HepG2 (cell line): ENCODE measurements at regions of chr17 and their contacts with region 1.

Region 1: DNA sequence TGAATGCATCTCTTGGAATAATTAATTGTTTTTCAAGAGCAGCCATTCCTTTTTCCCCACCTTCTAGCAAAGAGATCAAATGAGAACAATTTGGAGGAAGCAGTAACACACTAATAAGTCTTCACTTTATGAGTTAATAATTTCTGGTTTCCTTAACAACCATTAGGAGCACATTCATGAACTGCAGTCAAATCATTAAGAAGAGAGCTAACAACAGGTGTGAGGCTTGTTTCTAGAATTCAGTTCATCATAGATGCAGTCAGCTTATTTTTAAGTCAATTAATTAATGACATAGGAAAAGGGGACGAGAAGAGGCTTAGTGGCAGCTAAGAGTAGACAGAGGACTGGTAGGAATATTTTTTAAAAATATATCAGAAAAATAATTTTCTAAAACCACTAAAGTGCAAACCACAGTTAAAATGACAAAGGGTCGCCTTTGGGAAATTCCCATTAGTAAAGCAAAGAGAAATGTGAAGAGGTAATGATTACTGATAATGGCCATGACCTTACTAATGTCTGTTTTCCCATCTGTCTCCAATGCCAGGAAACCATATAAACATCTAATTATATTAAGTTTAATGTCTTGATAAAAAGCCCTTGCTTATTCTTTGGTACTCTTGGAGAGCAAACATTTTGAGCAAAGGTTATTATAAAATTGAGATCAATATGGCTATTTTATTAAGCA is 184.2 kb downstream of the KCNJ2 start:
- DNase-seq: no peak
- ATAC-seq: no peak
- H3K4me3 ChIP-seq: no peak overlapping the region
- H3K27ac ChIP-seq: no peak overlapping the region
- H3K4me1 ChIP-seq: no peaks in the 10 kb centered on the region
- H3K27me3 ChIP-seq: no peaks in the 10 kb centered on the region; a peak in 1 of 5 replicates
- CTCF ChIP-seq: no peak
- EP300 ChIP-seq: no peak
- POLR2A ChIP-seq: no peak
- RAD21 ChIP-seq: no peak

Region 2: GRCh38 chr17:70314096-70314495 is 39.5 kb before region 1 on chr17:
- CTCF ChIA-PET with region 1: no interaction called
- POLR2A ChIA-PET with region 1: no interaction called
- in situ Hi-C with region 1: no loop called
- intact Hi-C with region 1: loop called (anchors 2 kb)
- DNase-seq: no peak
- ATAC-seq: no peak
- H3K4me3 ChIP-seq: no peak overlapping the region
- H3K27ac ChIP-seq: no peak overlapping the region
- H3K4me1 ChIP-seq: no peaks in the 10 kb centered on the region
- H3K27me3 ChIP-seq: no peaks in the 10 kb centered on the region
- CTCF ChIP-seq: no peak
- EP300 ChIP-seq: no peak
- POLR2A ChIP-seq: no peak
- RAD21 ChIP-seq: no peak